Spleen (tissue), 13 donors: ENCODE measurements at regions of chr6 and their contacts with region 1.

Region 1: GRCh38 chr6:106979427-106979884 is 4.9 kb upstream of the CD24 start:
- DNase-seq: peak; percentile 95
- H3K4me3 ChIP-seq: no peak overlapping the region
- H3K27ac ChIP-seq: no peak overlapping the region
- H3K4me1 ChIP-seq: peaks cover under 1 to 32% (median 18%) of the 10 kb centered on the region in 6 donors
- H3K27me3 ChIP-seq: peaks cover 0 to 77% (median 25%) of the 10 kb centered on the region in 7 donors
- CTCF ChIP-seq: peak; percentile 80 to 93 (median 89)
- POLR2A ChIP-seq: no peak

Region 2: GRCh38 chr6:106339334-106340029 is 640.0 kb before region 1 on chr6:
- intact Hi-C with region 1: loop called (anchors 5 kb)
- DNase-seq: no peak
- H3K4me3 ChIP-seq: no peak overlapping the region
- H3K27ac ChIP-seq: no peak overlapping the region
- H3K4me1 ChIP-seq: peaks cover 0 to 9% (median 3%) of the 10 kb centered on the region in 6 donors
- H3K27me3 ChIP-seq: peaks cover 0 to 13% (median 0%) of the 10 kb centered on the region in 7 donors
- CTCF ChIP-seq: peak in 10 of 11 experiments; percentile 4 to 78 (median 62)
- POLR2A ChIP-seq: no peak

Region 3: DNA sequence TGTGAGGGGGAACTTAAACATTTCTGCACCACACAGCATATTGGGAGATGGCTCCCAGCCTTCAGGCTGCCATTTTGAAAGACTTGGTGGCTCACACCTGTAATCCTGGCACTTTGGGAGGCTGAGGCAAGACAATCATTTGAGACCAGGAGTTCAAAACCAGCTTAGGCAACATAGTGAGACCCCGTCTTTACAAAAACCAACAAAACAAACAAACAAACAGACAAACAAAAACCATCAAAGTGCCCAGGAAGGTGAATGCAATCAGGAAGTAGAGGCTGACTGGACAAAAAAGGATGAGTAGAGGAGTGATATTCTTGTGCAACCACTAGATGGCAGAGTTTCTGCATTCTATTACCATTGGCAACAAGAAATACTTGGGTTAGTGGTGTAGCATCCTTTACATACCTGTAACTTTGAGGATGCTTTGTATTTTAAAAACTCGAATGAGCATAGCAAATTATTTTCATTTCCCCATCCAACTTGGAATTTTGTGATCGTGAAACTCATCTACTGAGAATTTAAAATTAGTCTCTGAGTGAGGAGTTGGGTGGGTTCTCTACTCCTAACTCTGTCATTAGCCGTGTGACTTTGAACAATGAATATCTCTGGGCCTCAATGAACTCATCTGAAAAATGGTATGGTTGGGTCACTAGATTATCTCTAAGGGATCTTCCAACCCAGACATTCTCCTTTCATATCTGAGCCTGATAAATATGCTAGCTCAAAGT is 534.5 kb before region 1 on chr6:
- intact Hi-C with region 1: loop called (anchors 5 kb)
- DNase-seq: no peak
- H3K4me3 ChIP-seq: no peak overlapping the region
- H3K27ac ChIP-seq: no peak overlapping the region
- H3K4me1 ChIP-seq: peaks cover 4 to 43% (median 17%) of the 10 kb centered on the region in 6 donors
- H3K27me3 ChIP-seq: peaks cover 0 to 33% (median 0%) of the 10 kb centered on the region in 7 donors
- CTCF ChIP-seq: peak; percentile 70 to 91 (median 81)
- POLR2A ChIP-seq: no peak

Region 4: DNA sequence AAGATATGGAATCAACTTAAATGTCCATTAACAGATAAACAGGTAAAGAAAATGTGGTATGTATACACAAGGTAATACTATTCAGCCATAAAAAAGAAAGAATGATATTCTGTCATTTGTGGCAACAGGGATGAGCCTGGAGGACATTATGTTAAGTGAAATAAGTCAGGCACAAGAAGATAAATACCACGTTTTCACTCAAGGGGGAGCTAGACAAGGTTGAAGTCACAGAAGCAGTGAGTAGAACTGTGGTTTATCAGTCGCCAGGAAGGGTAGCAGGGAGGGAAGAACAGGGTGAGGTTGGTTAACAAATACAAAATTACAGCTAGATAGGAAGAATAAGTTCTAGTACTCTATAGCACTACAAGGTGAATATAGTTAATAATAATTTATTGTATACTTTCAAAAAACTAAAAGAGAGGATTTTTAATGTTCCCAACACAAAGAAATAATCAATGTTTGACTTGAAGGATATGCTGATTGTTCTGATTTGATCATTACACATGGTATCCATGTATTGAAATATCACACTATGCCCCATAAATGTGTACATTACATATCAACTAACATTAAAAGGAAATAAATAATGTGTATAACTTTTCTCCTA is 371.3 kb before region 1 on chr6:
- intact Hi-C with region 1: loop called (anchors 5 kb)
- DNase-seq: no peak
- H3K4me3 ChIP-seq: no peak overlapping the region
- H3K27ac ChIP-seq: no peak overlapping the region
- H3K4me1 ChIP-seq: peaks cover 0 to 30% (median 3%) of the 10 kb centered on the region in 6 donors
- H3K27me3 ChIP-seq: no peaks in the 10 kb centered on the region
- CTCF ChIP-seq: peak; percentile 46 to 89 (median 69)
- POLR2A ChIP-seq: no peak

Region 5: GRCh38 chr6:107318100-107318736 is 338.8 kb after region 1 on chr6:
- intact Hi-C with region 1: no loop called
- DNase-seq: peak; percentile 72
- H3K4me3 ChIP-seq: no peak overlapping the region
- H3K27ac ChIP-seq: no peak overlapping the region
- H3K4me1 ChIP-seq: peaks cover 0 to 20% (median 5%) of the 10 kb centered on the region in 6 donors
- H3K27me3 ChIP-seq: no peaks in the 10 kb centered on the region
- CTCF ChIP-seq: peak in 7 of 11 experiments; percentile 26 to 51 (median 43)
- POLR2A ChIP-seq: no peak